GM12878 (cell line): ENCODE measurements at regions of chr14 and their contacts with region 1.

Region 1: GRCh38 chr14:87944987-87945604 is 47.9 kb downstream of the GALC start:
- DNase-seq: no peak
- ATAC-seq: 0 out of 3 replicates have a peak, but pooled peaks have one; percentile 22
- H3K4me3 ChIP-seq: no peak overlapping the region
- H3K27ac ChIP-seq: no peak overlapping the region
- H3K4me1 ChIP-seq: peaks cover 9% of the 10 kb centered on the region
- H3K27me3 ChIP-seq: no peaks in the 10 kb centered on the region
- CTCF ChIP-seq: peak; percentile 47 to 69 (median 54); a peak in 4 of 6 replicates
- EP300 ChIP-seq: no peak
- POLR2A ChIP-seq: no peak
- RAD21 ChIP-seq: peak; percentile 81

Region 2: GRCh38 chr14:87971010-87971409 is 25.9 kb after region 1 on chr14:
- CTCF ChIA-PET with region 1: interaction called, 17 read pairs
- POLR2A ChIA-PET with region 1: no interaction called
- RAD21 ChIA-PET with region 1: interaction called, 4 read pairs
- SMC1A ChIA-PET with region 1: interaction called, 9 read pairs
- in situ Hi-C with region 1: no loop called
- intact Hi-C with region 1: no loop called
- DNase-seq: no peak
- ATAC-seq: peak; percentile 93
- H3K4me3 ChIP-seq: no peak overlapping the region
- H3K27ac ChIP-seq: no peak overlapping the region
- H3K4me1 ChIP-seq: no peaks in the 10 kb centered on the region; the same call in 1 of the 2 replicates
- H3K27me3 ChIP-seq: no peaks in the 10 kb centered on the region
- CTCF ChIP-seq: no peak
- EP300 ChIP-seq: no peak
- POLR2A ChIP-seq: no peak
- RAD21 ChIP-seq: no peak

Region 3: GRCh38 chr14:88013750-88014349 is 68.8 kb after region 1 on chr14:
- CTCF ChIA-PET with region 1: interaction called, 67 read pairs
- POLR2A ChIA-PET with region 1: no interaction called
- RAD21 ChIA-PET with region 1: interaction called, 11 read pairs
- SMC1A ChIA-PET with region 1: interaction called, 43 read pairs
- in situ Hi-C with region 1: no loop called
- intact Hi-C with region 1: loop called (anchors 2 kb)
- DNase-seq: no peak
- ATAC-seq: peak; percentile 79
- H3K4me3 ChIP-seq: no peak overlapping the region
- H3K27ac ChIP-seq: no peak overlapping the region
- H3K4me1 ChIP-seq: no peaks in the 10 kb centered on the region
- H3K27me3 ChIP-seq: no peaks in the 10 kb centered on the region
- CTCF ChIP-seq: peak; percentile 88 to 96 (median 91); a peak in 5 of 6 replicates
- EP300 ChIP-seq: no peak
- POLR2A ChIP-seq: no peak
- RAD21 ChIP-seq: peak; percentile 79

Region 4: DNA sequence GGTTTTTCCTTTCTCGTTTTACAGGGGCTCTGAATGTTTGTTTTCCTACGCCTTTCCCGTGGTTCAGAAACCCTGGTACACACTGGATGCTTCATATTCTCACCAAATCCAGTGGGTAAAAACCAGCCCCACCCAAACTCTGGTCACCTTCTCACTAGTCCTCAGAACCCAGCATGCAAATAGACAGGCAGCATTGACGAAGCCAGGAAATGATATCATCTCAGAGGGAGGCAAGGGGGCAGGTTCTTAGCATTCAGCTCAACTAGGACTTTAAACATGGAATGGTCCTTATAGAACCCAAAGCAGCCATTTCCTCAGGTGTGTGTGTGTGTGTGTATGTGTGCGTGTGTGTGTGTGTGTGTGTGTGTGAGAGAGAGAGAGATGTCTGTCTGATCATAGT is 236.0 kb after region 1 on chr14:
- CTCF ChIA-PET with region 1: interaction called, 13 read pairs
- POLR2A ChIA-PET with region 1: no interaction called
- RAD21 ChIA-PET with region 1: interaction called, 4 read pairs
- SMC1A ChIA-PET with region 1: no interaction called
- in situ Hi-C with region 1: loop called (anchors 10 kb)
- intact Hi-C with region 1: loop called (anchors 5 kb)
- DNase-seq: no peak
- ATAC-seq: peak; percentile 44; the same call in 1 of the 3 replicates
- H3K4me3 ChIP-seq: no peak overlapping the region
- H3K27ac ChIP-seq: no peak overlapping the region
- H3K4me1 ChIP-seq: no peaks in the 10 kb centered on the region
- H3K27me3 ChIP-seq: no peaks in the 10 kb centered on the region; a peak in 2 of 4 replicates
- CTCF ChIP-seq: no peak
- EP300 ChIP-seq: no peak
- POLR2A ChIP-seq: no peak
- RAD21 ChIP-seq: no peak

Region 5: GRCh38 chr14:88380405-88380804 is 435.3 kb after region 1 on chr14:
- CTCF ChIA-PET with region 1: interaction called, 11 read pairs
- POLR2A ChIA-PET with region 1: no interaction called
- RAD21 ChIA-PET with region 1: interaction called, 3 read pairs
- SMC1A ChIA-PET with region 1: interaction called, 16 read pairs
- in situ Hi-C with region 1: no loop called
- intact Hi-C with region 1: loop called (anchors 10 kb)
- DNase-seq: no peak
- ATAC-seq: no peak
- H3K4me3 ChIP-seq: no peak overlapping the region
- H3K27ac ChIP-seq: no peak overlapping the region
- H3K4me1 ChIP-seq: no peaks in the 10 kb centered on the region
- H3K27me3 ChIP-seq: no peaks in the 10 kb centered on the region; a peak in 1 of 4 replicates
- CTCF ChIP-seq: peak in 2 of 3 experiments; percentile 8 to 39; a peak in 2 of 6 replicates
- EP300 ChIP-seq: no peak
- POLR2A ChIP-seq: no peak
- RAD21 ChIP-seq: peak; percentile 36; the same call in 1 of the 2 replicates